ENCODE measurements at regions of chr7 and their contacts with region 1.

Region 1: DNA sequence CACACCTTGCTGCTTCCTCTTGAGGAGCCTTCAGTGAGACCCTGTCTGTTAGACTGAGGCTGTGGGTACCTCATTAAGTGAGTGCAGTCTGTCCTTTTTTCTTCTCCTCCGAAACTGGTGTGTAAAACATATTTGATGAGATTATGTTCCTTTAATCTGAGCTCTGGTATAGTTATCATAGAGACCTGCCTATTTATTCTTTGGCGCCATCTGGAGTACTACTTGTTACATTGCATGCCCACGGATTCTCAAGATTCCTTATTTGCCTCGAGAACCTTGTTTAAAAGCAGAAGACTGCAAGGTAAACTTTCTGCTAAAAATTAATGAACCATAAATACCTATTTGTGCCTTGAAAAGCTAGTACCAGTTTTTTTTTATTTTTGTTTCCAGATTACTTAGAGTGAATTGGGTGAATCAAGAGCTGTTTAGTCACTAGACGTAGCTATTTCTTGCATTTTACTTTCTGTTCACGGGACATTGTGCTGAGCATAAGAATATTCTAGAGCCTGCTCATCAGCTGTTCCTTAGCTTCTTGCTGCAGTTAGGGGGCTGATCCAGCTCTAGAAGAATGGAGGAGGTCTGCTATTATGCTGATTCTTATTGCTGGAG is 16.9 kb upstream of the STMP1 start:
- DNase-seq: peak; percentile 31
- ATAC-seq: peak; percentile 72
- H3K4me3 ChIP-seq: no peak overlapping the region
- H3K27ac ChIP-seq: no peak overlapping the region
- H3K4me1 ChIP-seq: no peaks in the 10 kb centered on the region
- H3K27me3 ChIP-seq: no peaks in the 10 kb centered on the region
- CTCF ChIP-seq: peak; percentile 60
- EP300 ChIP-seq: no peak
- POLR2A ChIP-seq: no peak
- RAD21 ChIP-seq: no peak

Region 2: DNA sequence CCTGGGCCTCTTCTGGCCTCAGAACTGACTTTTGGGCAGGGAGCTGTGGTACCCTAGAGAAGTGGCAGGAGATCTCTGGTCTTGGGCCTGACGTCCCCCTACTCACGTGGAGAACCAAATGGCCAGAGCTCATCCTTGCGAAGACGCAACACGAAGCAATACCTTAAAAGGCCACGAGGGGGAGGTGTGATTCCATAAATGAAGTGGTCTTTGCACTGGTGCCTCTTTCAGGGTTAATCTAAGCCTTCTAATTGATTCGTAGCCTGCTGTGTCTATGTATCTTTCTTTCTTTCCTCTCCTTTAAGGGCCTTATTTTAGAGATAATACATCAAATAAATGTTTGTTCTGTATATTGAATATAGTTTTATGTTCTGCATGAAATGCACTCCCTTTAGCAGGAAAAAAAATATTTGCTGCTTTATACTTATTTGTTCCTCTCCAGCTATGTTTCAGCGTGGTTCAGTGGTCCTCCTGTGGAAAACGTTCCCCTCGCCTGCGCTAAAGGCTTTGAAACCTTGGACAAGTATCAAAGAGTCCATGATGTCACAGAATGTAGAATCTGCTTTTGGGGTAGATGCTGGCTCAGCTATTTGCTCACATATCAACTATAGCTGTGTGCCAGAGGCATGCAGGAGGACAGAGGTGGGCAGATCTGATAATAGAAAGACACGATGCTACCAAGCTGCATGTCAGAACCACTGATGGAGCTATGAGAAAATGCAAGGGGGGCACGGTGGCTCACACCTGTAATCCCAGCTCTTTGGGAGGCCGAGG is 370.7 kb before region 1 on chr7:
- CTCF ChIA-PET with region 1: no interaction called
- POLR2A ChIA-PET with region 1: no interaction called
- in situ Hi-C with region 1: loop called (anchors 10 kb)
- intact Hi-C with region 1: no loop called
- DNase-seq: peak; percentile 69
- ATAC-seq: peak; percentile 83
- H3K4me3 ChIP-seq: no peak overlapping the region
- H3K27ac ChIP-seq: no peak overlapping the region
- H3K4me1 ChIP-seq: peaks cover 14% of the 10 kb centered on the region
- H3K27me3 ChIP-seq: peaks cover 1 to 18% of the 10 kb centered on the region in 2 experiments; a peak in 3 of 5 replicates
- CTCF ChIP-seq: peak; percentile 87
- EP300 ChIP-seq: no peak
- POLR2A ChIP-seq: no peak
- RAD21 ChIP-seq: peak; percentile 71

Region 3: GRCh38 chr7:135620980-135621850 is 24.2 kb before region 1 on chr7:
- CTCF ChIA-PET with region 1: interaction called, 16 read pairs
- POLR2A ChIA-PET with region 1: no interaction called
- in situ Hi-C with region 1: no loop called
- intact Hi-C with region 1: no loop called
- DNase-seq: peak; percentile 74
- ATAC-seq: peak; percentile 63
- H3K4me3 ChIP-seq: no peak overlapping the region
- H3K27ac ChIP-seq: no peak overlapping the region
- H3K4me1 ChIP-seq: no peaks in the 10 kb centered on the region
- H3K27me3 ChIP-seq: no peaks in the 10 kb centered on the region
- CTCF ChIP-seq: peak; percentile 64
- EP300 ChIP-seq: no peak
- POLR2A ChIP-seq: no peak
- RAD21 ChIP-seq: no peak